ENCODE measurements at regions of chr6 and their contacts with region 1.

Region 1: GRCh38 chr6:161257793-161258457 is 15.9 kb downstream of the AGPAT4 start:
- DNase-seq: peak; percentile 82
- H3K4me3 ChIP-seq: no peak overlapping the region
- H3K27ac ChIP-seq: peak overlapping the region; percentile 33 to 69 (median 61)
- H3K4me1 ChIP-seq: peaks cover 0 to 49% (median 30%) of the 10 kb centered on the region in 4 donors
- H3K27me3 ChIP-seq: no peaks in the 10 kb centered on the region
- CTCF ChIP-seq: no peak
- EP300 ChIP-seq: peak in 2 of 4 donors; percentile 63 to 64
- POLR2A ChIP-seq: no peak

Region 2: DNA sequence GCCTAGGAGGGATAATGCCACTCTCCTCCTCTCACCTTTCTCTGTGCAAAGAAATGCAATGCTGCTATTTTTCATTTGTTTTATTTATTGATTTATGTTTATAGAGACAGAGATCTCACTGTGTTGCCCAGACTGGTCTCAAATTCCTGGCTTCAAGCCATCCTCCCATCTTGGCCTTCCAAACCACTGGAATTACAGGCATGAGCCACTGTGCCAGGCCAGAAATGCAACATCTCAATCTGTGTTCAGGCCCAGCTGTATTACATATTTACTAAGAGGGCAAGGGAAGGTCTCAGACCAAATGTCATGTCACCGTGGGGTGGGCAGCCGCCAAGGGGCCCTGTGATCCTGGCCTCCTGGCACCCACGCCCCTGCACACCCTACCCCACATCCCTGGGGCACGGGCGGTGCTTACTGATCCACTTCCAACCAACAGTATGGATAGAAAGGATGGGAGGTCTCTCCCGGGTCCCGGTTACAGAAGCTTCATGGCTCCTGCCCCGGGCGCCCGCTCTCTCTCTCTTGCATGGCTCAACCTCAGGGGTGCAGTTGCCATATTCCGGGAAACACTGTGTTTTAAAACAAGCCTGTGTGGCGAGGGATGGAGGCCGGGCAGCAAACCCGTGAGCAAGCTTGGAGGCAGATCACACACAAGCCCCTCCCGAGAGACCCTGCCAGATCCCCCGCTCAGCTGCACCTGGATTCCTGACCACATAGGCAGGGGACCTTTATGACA is 95.9 kb before region 1 on chr6:
- intact Hi-C with region 1: loop called (anchors 5 kb)
- DNase-seq: peak; percentile 62
- H3K4me3 ChIP-seq: no peak overlapping the region
- H3K27ac ChIP-seq: peak overlapping the region in 2 of 4 donors; percentile 23 to 76
- H3K4me1 ChIP-seq: peaks cover 0 to 30% (median 26%) of the 10 kb centered on the region in 4 donors
- H3K27me3 ChIP-seq: no peaks in the 10 kb centered on the region
- CTCF ChIP-seq: no peak
- EP300 ChIP-seq: no peak
- POLR2A ChIP-seq: no peak